ENCODE measurements at regions of chr14 and their contacts with region 1.

Region 1: GRCh38 chr14:21711360-21711961 is 37.8 kb upstream of the OR4E1 start:
- DNase-seq: peak in 2 of 5 donors; percentile 35 to 43
- H3K4me3 ChIP-seq: no peak overlapping the region
- H3K4me3 Mint-ChIP-seq: peak overlapping the region in 6 of 8 donors; percentile 7 to 74 (median 60)
- H3K27ac ChIP-seq: peak overlapping the region; percentile 1
- H3K27ac Mint-ChIP-seq: peak overlapping the region in 4 of 7 donors; percentile 56 to 84 (median 80)
- H3K4me1 ChIP-seq: no peaks in the 10 kb centered on the region
- H3K4me1 Mint-ChIP-seq: peaks cover 0 to 15% (median 3%) of the 10 kb centered on the region in 4 donors
- H3K27me3 ChIP-seq: no peaks in the 10 kb centered on the region
- H3K27me3 Mint-ChIP-seq: peaks cover 12 to 23% of the 10 kb centered on the region in 2 donors

Region 2: GRCh38 chr14:21352587-21352986 is 358.9 kb before region 1 on chr14:
- CTCF ChIA-PET with region 1: no interaction called
- POLR2A ChIA-PET with region 1: no interaction called
- intact Hi-C with region 1: no loop called
- DNase-seq: no peak
- H3K4me3 ChIP-seq: no peak overlapping the region
- H3K4me3 Mint-ChIP-seq: no peak overlapping the region
- H3K27ac ChIP-seq: no peak overlapping the region
- H3K27ac Mint-ChIP-seq: peak overlapping the region in 3 of 7 donors; percentile 7 to 85 (median 75)
- H3K4me1 ChIP-seq: no peaks in the 10 kb centered on the region
- H3K4me1 Mint-ChIP-seq: no peaks in the 10 kb centered on the region
- H3K27me3 ChIP-seq: no peaks in the 10 kb centered on the region
- H3K27me3 Mint-ChIP-seq: no peaks in the 10 kb centered on the region

Region 3: DNA sequence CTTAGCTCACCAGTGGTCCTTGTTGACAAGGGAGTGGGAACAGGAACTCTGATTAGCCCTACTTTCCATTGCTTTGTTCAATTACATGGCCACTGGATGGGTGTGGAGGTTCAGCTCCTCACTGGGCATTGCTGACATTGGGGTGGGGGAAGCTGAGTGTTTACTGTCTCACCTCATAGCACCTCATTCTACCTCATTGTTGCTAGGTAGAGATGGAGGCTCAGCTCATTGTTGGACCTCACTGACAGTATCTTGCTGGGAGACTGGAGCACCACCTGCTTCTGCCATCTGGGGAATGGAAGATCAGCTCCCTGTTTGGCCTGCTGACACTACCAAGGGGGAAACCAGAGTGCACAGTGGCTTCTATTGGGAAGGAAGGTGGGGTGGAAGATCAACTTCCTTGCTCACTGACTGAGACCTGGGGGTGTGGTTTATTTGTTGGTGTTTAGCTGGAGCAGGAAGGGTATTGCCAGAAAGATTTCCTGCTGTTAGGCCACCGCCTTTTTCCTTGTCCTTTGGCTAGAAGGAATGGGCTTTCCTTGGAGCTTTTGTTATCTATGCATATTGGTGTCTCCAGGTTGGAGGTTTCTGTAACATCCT is 59.2 kb before region 1 on chr14:
- CTCF ChIA-PET with region 1: no interaction called
- POLR2A ChIA-PET with region 1: no interaction called
- intact Hi-C with region 1: no loop called
- DNase-seq: no peak
- H3K4me3 ChIP-seq: no peak overlapping the region
- H3K4me3 Mint-ChIP-seq: no peak overlapping the region
- H3K27ac ChIP-seq: no peak overlapping the region
- H3K27ac Mint-ChIP-seq: no peak overlapping the region
- H3K4me1 ChIP-seq: no peaks in the 10 kb centered on the region
- H3K4me1 Mint-ChIP-seq: no peaks in the 10 kb centered on the region
- H3K27me3 ChIP-seq: no peaks in the 10 kb centered on the region
- H3K27me3 Mint-ChIP-seq: peaks cover 11 to 14% of the 10 kb centered on the region in 2 donors

Region 4: GRCh38 chr14:21672116-21672515 is 39.3 kb before region 1 on chr14:
- CTCF ChIA-PET with region 1: no interaction called
- POLR2A ChIA-PET with region 1: no interaction called
- intact Hi-C with region 1: no loop called
- DNase-seq: no peak
- H3K4me3 ChIP-seq: no peak overlapping the region
- H3K4me3 Mint-ChIP-seq: no peak overlapping the region
- H3K27ac ChIP-seq: no peak overlapping the region
- H3K27ac Mint-ChIP-seq: no peak overlapping the region
- H3K4me1 ChIP-seq: no peaks in the 10 kb centered on the region
- H3K4me1 Mint-ChIP-seq: no peaks in the 10 kb centered on the region
- H3K27me3 ChIP-seq: no peaks in the 10 kb centered on the region
- H3K27me3 Mint-ChIP-seq: peaks cover 15 to 21% of the 10 kb centered on the region in 2 donors

Region 5: DNA sequence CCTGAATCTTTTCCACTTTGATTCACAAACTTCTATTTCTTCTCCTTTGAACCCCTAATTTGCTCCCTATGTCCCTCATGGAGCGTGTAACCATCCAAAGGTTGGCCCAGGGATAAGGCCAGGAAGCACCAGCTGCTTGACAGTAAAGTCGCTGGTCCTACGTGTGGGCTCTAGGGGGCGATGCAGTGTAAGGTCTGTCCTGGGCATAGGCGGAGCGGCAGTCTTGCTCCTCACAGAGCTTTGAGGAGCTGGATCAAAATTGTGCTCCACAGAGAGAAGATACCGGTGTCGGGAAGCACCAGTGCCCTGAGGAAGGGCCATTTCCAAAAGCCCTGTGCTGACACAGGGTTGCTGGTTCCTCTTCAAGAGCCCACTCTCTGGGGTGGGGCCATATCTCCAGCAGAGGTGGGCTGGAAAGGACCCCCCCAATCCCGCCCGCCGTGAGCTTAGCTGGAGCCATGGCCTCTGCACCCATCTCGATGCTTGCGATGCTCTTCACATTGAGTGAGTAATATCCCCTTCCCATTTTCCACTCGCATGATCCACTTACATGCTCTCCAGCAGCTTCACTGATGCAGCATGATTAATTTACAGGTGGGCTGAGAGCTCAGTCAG is 12.1 kb after region 1 on chr14:
- CTCF ChIA-PET with region 1: interaction called, 34 read pairs
- POLR2A ChIA-PET with region 1: interaction called, 10 read pairs
- intact Hi-C with region 1: no loop called
- DNase-seq: peak in 3 of 5 donors; percentile 37 to 62 (median 39)
- H3K4me3 ChIP-seq: no peak overlapping the region
- H3K4me3 Mint-ChIP-seq: peak overlapping the region; percentile 56 to 83 (median 78)
- H3K27ac ChIP-seq: peak overlapping the region; percentile 22
- H3K27ac Mint-ChIP-seq: peak overlapping the region; percentile 4 to 90 (median 58)
- H3K4me1 ChIP-seq: no peaks in the 10 kb centered on the region
- H3K4me1 Mint-ChIP-seq: peaks cover 0 to 9% (median 0%) of the 10 kb centered on the region in 4 donors
- H3K27me3 ChIP-seq: no peaks in the 10 kb centered on the region
- H3K27me3 Mint-ChIP-seq: peaks cover 15 to 16% of the 10 kb centered on the region in 2 donors

Region 6: GRCh38 chr14:21748869-21749303 is 37.4 kb after region 1 on chr14:
- CTCF ChIA-PET with region 1: no interaction called
- POLR2A ChIA-PET with region 1: interaction called, 3 read pairs
- intact Hi-C with region 1: loop called (anchors 1 kb)
- DNase-seq: peak; percentile 48 to 54 (median 50)
- H3K4me3 ChIP-seq: no peak overlapping the region
- H3K4me3 Mint-ChIP-seq: peak overlapping the region; percentile 18 to 78 (median 62)
- H3K27ac ChIP-seq: no peak overlapping the region
- H3K27ac Mint-ChIP-seq: peak overlapping the region in 6 of 7 donors; percentile 26 to 82 (median 50)
- H3K4me1 ChIP-seq: no peaks in the 10 kb centered on the region
- H3K4me1 Mint-ChIP-seq: peaks cover 6 to 9% (median 8%) of the 10 kb centered on the region in 4 donors
- H3K27me3 ChIP-seq: no peaks in the 10 kb centered on the region
- H3K27me3 Mint-ChIP-seq: peaks cover 12 to 19% of the 10 kb centered on the region in 2 donors